CD4-positive, alpha-beta memory T cell (primary cell): ENCODE measurements at regions of chr17 and their contacts with region 1.

Region 1: GRCh38 chr17:2416010-2416734 is 15.3 kb upstream of the MNT start:
- DNase-seq: peak; percentile 78 to 84 (median 81)
- H3K4me3 ChIP-seq: no peak overlapping the region
- H3K4me3 Mint-ChIP-seq: no peak overlapping the region
- H3K27ac ChIP-seq: no peak overlapping the region
- H3K27ac Mint-ChIP-seq: peak overlapping the region in 6 of 7 donors; percentile 47 to 91 (median 75)
- H3K4me1 ChIP-seq: no peaks in the 10 kb centered on the region
- H3K4me1 Mint-ChIP-seq: peaks cover 0 to 10% (median 0%) of the 10 kb centered on the region in 4 donors
- H3K27me3 ChIP-seq: no peaks in the 10 kb centered on the region
- H3K27me3 Mint-ChIP-seq: no peaks in the 10 kb centered on the region

Region 2: GRCh38 chr17:2361010-2361760 is 55.0 kb before region 1 on chr17:
- CTCF ChIA-PET with region 1: interaction called, 10 read pairs
- POLR2A ChIA-PET with region 1: no interaction called
- intact Hi-C with region 1: no loop called
- DNase-seq: no peak
- H3K4me3 ChIP-seq: no peak overlapping the region
- H3K4me3 Mint-ChIP-seq: no peak overlapping the region
- H3K27ac ChIP-seq: no peak overlapping the region
- H3K27ac Mint-ChIP-seq: no peak overlapping the region
- H3K4me1 ChIP-seq: no peaks in the 10 kb centered on the region
- H3K4me1 Mint-ChIP-seq: no peaks in the 10 kb centered on the region
- H3K27me3 ChIP-seq: no peaks in the 10 kb centered on the region
- H3K27me3 Mint-ChIP-seq: no peaks in the 10 kb centered on the region

Region 3: GRCh38 chr17:2380226-2380922 is 35.8 kb before region 1 on chr17:
- CTCF ChIA-PET with region 1: interaction called, 558 read pairs
- POLR2A ChIA-PET with region 1: interaction called, 78 read pairs
- intact Hi-C with region 1: loop called (anchors 1 kb)
- DNase-seq: peak in 1 of 5 donors; percentile 41
- H3K4me3 ChIP-seq: no peak overlapping the region
- H3K4me3 Mint-ChIP-seq: no peak overlapping the region
- H3K27ac ChIP-seq: no peak overlapping the region
- H3K27ac Mint-ChIP-seq: peak overlapping the region in 1 of 7 donors; percentile 44
- H3K4me1 ChIP-seq: peaks cover 4% of the 10 kb centered on the region
- H3K4me1 Mint-ChIP-seq: peaks cover 3 to 15% (median 5%) of the 10 kb centered on the region in 4 donors
- H3K27me3 ChIP-seq: no peaks in the 10 kb centered on the region
- H3K27me3 Mint-ChIP-seq: no peaks in the 10 kb centered on the region

Region 4: GRCh38 chr17:2392252-2393173 is 23.7 kb before region 1 on chr17:
- CTCF ChIA-PET with region 1: interaction called, 28 read pairs
- POLR2A ChIA-PET with region 1: interaction called, 11 read pairs
- intact Hi-C with region 1: no loop called
- DNase-seq: peak; percentile 95 to 99 (median 98)
- H3K4me3 ChIP-seq: peak overlapping the region; percentile 38 to 91
- H3K4me3 Mint-ChIP-seq: peak overlapping the region; percentile 88 to 98 (median 96)
- H3K27ac ChIP-seq: peak overlapping the region; percentile 100
- H3K27ac Mint-ChIP-seq: peak overlapping the region; percentile 95 to 100 (median 99)
- H3K4me1 ChIP-seq: peaks cover 60% of the 10 kb centered on the region
- H3K4me1 Mint-ChIP-seq: peaks cover 31 to 69% (median 49%) of the 10 kb centered on the region in 4 donors
- H3K27me3 ChIP-seq: no peaks in the 10 kb centered on the region
- H3K27me3 Mint-ChIP-seq: peaks cover 0 to 1% of the 10 kb centered on the region in 2 donors

Region 5: GRCh38 chr17:2401426-2402221 is 14.5 kb before region 1 on chr17:
- CTCF ChIA-PET with region 1: interaction called, 20 read pairs
- POLR2A ChIA-PET with region 1: interaction called, 21 read pairs
- intact Hi-C with region 1: loop called (anchors 1 kb)
- DNase-seq: peak; percentile 99 to 100 (median 100)
- H3K4me3 ChIP-seq: peak overlapping the region; percentile 65 to 89
- H3K4me3 Mint-ChIP-seq: peak overlapping the region; percentile 90 to 100 (median 98)
- H3K27ac ChIP-seq: peak overlapping the region; percentile 95
- H3K27ac Mint-ChIP-seq: peak overlapping the region; percentile 99 to 100 (median 100)
- H3K4me1 ChIP-seq: peaks cover 35% of the 10 kb centered on the region
- H3K4me1 Mint-ChIP-seq: peaks cover 18 to 54% (median 33%) of the 10 kb centered on the region in 4 donors
- H3K27me3 ChIP-seq: no peaks in the 10 kb centered on the region
- H3K27me3 Mint-ChIP-seq: peaks cover 0 to 8% of the 10 kb centered on the region in 2 donors